GM12878 (cell line): ENCODE measurements at regions of chr1 and their contacts with region 1.

Region 1: DNA sequence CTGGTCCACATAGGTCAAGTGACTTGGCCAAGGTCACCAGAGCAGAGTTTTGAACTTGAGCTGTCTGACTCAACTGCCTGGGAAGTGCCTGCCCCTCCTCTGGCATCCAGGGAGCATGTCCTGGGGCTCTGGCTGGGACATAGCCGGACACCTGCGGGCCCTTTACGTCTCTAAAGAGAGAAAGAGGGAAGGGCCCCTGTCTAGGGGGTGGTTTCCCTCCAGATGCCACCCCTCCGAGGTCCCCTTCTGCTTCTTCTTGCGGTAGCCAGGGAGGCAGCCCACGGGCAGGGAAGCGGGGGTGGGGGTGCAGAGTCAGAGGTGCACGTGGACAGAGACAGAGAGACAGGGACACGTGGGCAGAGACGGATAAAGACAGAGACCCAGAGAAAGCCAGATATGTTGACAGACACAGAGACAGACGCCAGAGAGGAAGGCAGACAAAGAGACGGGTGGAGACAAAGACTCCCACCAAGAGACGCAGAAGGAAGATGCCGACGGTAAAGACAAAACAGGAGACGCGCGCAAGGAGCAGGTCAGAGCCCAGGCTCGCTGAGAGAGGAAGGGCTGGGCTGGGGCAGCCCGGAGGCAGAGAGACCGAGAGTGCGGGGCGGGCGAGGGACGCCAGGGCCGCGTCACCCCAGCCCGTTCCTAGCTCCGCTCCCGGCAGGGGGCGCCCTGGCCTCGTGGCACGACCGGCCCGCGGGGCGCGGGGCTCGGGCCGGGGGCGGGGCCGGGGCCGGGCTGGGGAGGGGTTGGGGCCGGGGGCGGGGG is 458 bp upstream of the ALPL start:
- DNase-seq: no peak
- ATAC-seq: peak; percentile 96
- H3K4me3 ChIP-seq: no peak overlapping the region
- H3K27ac ChIP-seq: no peak overlapping the region
- H3K4me1 ChIP-seq: peaks cover 3% of the 10 kb centered on the region
- H3K27me3 ChIP-seq: peaks cover 2 to 16% of the 10 kb centered on the region in 2 experiments
- CTCF ChIP-seq: peak; percentile 36 to 67 (median 65); a peak in 5 of 6 replicates
- EP300 ChIP-seq: no peak
- POLR2A ChIP-seq: no peak
- RAD21 ChIP-seq: peak; percentile 61

Region 2: GRCh38 chr1:21468599-21468998 is 40.2 kb before region 1 on chr1:
- CTCF ChIA-PET with region 1: no interaction called
- POLR2A ChIA-PET with region 1: no interaction called
- RAD21 ChIA-PET with region 1: no interaction called
- SMC1A ChIA-PET with region 1: no interaction called
- in situ Hi-C with region 1: no loop called
- intact Hi-C with region 1: no loop called
- DNase-seq: no peak
- ATAC-seq: no peak
- H3K4me3 ChIP-seq: no peak overlapping the region
- H3K27ac ChIP-seq: no peak overlapping the region
- H3K4me1 ChIP-seq: no peaks in the 10 kb centered on the region
- H3K27me3 ChIP-seq: no peaks in the 10 kb centered on the region
- CTCF ChIP-seq: peak in 2 of 3 experiments; percentile 35 to 36; a peak in 4 of 6 replicates
- EP300 ChIP-seq: no peak
- POLR2A ChIP-seq: no peak
- RAD21 ChIP-seq: peak; percentile 35

Region 3: DNA sequence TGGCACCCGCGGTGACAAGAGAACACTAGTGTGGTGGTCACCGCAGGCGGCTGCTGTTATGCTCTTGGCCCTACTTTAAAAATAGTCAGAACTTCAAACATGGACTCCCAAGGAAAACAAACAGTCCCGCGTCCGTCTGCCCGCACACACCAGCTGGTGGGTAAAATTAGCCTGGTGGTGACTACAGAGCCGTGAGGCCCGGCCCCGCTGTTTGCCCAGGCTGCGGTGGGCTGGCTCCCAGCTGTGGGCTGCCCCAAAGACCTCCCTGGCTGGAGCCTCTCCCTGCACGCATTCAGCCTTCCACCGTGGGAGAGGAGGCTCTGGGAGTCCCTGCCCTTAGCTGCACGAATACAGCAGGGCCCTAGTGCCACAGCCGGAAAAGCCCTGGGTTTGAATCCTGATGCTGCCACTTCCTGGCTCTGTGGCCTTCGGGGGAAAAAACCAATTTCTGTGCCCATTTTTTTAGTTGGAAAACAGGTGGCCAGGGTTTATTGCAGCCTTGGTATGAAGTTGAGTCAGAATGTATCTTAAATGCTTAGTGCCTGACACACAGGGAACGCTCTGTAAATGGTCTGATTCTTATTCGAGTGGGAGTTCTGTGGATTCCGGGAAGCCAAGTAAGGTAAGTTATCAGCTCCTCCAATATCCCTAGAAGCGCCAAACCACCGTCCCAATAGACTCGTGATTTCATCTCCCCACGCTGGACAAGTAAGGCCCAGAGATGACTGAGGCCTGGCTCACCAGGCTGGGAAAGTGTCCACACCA is 58.7 kb after region 1 on chr1:
- CTCF ChIA-PET with region 1: no interaction called
- POLR2A ChIA-PET with region 1: no interaction called
- RAD21 ChIA-PET with region 1: no interaction called
- SMC1A ChIA-PET with region 1: no interaction called
- in situ Hi-C with region 1: no loop called
- intact Hi-C with region 1: no loop called
- DNase-seq: no peak
- ATAC-seq: no peak
- H3K4me3 ChIP-seq: no peak overlapping the region
- H3K27ac ChIP-seq: no peak overlapping the region
- H3K4me1 ChIP-seq: no peaks in the 10 kb centered on the region
- H3K27me3 ChIP-seq: no peaks in the 10 kb centered on the region; a peak in 1 of 4 replicates
- CTCF ChIP-seq: no peak
- EP300 ChIP-seq: no peak
- POLR2A ChIP-seq: no peak
- RAD21 ChIP-seq: no peak

Region 4: DNA sequence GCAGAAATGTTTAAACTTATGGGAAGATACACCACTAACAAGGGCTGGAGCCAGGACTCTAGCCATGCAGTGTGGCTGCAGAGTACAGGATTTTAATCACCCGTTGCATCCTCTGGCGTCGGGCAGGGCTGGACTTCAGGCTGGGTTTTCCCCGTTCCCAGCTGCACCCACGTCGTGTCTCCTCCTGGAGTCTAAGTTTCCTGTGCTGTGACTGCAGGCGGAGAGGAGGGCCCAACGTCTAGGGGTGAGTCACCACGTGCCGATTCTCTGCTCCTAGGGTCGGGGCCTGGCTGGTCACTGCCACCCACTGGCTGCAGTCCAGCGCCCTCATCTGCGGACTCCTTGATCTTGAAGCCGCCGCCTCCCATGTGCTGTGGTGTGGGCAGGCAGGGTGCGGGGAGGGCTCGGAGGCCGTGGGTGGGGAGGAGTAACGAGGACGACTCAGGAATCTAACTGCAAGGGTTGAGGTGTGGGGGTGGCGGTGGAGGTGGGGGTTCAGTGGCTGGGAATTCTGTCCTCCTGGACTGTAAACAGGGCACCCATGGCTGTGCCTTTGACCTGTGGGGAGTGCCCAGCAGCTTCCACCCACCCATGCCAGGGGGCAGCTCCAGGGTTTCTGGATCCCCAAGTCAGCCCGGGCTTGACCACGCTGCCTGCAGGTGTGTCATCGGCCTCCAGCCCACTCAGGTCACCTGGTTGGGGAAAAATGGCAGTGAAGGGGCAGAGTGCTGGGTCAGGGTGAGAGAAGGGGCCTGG is 78.3 kb after region 1 on chr1:
- CTCF ChIA-PET with region 1: no interaction called
- POLR2A ChIA-PET with region 1: no interaction called
- RAD21 ChIA-PET with region 1: no interaction called
- SMC1A ChIA-PET with region 1: interaction called, 3 read pairs
- in situ Hi-C with region 1: no loop called
- intact Hi-C with region 1: loop called (anchors 5 kb)
- DNase-seq: no peak
- ATAC-seq: no peak
- H3K4me3 ChIP-seq: no peak overlapping the region
- H3K27ac ChIP-seq: no peak overlapping the region
- H3K4me1 ChIP-seq: no peaks in the 10 kb centered on the region
- H3K27me3 ChIP-seq: peaks cover 0 to 3% of the 10 kb centered on the region in 2 experiments; a peak in 1 of 4 replicates
- CTCF ChIP-seq: no peak
- EP300 ChIP-seq: no peak
- POLR2A ChIP-seq: no peak
- RAD21 ChIP-seq: no peak

Region 5: DNA sequence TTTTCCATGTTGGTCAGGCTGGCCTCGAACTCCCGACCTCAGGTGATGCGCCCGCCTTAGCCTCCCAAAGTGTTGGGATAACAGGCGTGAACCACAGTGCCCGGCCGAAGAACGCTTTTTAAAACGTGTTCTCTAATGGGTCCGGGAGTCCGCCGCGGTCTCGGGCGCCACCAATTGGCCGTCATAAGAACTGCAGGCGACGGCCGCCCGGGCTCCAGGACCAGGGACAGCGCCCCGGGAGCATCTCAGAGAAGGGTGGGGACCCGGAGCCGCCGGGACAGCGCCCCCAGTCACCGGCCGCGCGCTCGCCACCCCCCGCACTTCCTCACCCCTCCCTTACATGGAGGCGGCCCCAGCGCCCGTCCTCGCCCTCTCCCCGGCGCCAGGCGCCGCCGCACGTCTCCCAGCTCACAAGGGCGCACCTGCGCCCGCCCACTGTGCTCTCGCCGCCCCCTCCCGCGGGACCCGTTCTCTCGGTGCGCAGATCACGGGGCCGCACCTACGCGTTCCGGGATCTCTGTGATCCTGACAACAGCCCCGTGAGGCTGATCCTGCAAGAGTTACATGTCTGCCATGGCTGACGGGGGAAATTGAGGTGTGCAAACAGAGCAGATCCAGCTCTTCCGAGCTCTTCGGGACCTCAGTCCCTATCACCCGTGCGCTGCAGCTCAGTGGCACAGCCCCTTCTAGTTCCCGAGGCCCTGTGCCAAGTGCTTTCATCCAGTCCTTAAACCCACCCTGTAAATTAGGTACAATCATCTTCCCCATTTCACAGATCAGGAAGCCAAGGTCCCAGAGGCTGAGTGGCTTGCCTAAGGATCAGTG is 150.5 kb after region 1 on chr1:
- CTCF ChIA-PET with region 1: interaction called, 7 read pairs
- POLR2A ChIA-PET with region 1: no interaction called
- RAD21 ChIA-PET with region 1: interaction called, 3 read pairs
- SMC1A ChIA-PET with region 1: interaction called, 3 read pairs
- in situ Hi-C with region 1: no loop called
- intact Hi-C with region 1: loop called (anchors 10 kb)
- DNase-seq: no peak
- ATAC-seq: peak; percentile 92
- H3K4me3 ChIP-seq: no peak overlapping the region
- H3K27ac ChIP-seq: no peak overlapping the region
- H3K4me1 ChIP-seq: no peaks in the 10 kb centered on the region
- H3K27me3 ChIP-seq: peaks cover 0 to 2% of the 10 kb centered on the region in 2 experiments; a peak in 1 of 4 replicates
- CTCF ChIP-seq: peak; percentile 75 to 96 (median 87)
- EP300 ChIP-seq: no peak; a peak in 1 of 4 replicates
- POLR2A ChIP-seq: no peak
- RAD21 ChIP-seq: peak; percentile 79

Region 6: DNA sequence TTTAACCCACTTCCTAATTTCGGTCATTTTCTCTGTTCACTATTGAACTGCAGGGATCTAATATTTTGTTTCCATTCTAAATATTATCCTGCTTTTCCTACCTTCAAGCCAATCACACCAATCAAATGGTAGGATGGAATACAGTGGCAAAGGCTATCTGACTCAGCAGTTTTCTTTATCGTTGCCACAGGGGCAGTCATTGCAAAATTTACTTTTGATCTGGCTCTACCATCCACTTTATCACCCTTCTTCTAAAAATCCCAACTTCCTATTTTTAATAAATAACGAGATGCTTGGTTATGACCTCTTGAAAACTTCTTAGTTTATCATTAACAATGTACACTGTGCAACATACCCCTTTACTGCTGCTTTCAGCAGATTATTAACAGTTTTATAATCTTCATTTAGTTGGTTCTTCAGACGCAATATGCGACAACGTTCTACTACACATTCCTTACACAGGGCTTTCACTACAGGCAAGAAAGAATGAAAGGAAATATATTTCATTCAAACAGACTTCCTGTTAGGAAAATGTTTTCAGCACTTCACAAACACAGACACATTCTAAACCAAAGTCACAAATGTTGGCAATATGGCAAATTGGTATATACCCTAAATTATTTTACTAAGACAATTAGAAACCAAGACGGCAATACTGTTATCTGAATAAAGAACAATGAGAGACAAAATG is 212.7 kb after region 1 on chr1:
- CTCF ChIA-PET with region 1: no interaction called
- POLR2A ChIA-PET with region 1: no interaction called
- RAD21 ChIA-PET with region 1: no interaction called
- SMC1A ChIA-PET with region 1: no interaction called
- in situ Hi-C with region 1: no loop called
- intact Hi-C with region 1: no loop called
- DNase-seq: no peak
- ATAC-seq: no peak
- H3K4me3 ChIP-seq: no peak overlapping the region
- H3K27ac ChIP-seq: no peak overlapping the region
- H3K4me1 ChIP-seq: no peaks in the 10 kb centered on the region
- H3K27me3 ChIP-seq: no peaks in the 10 kb centered on the region
- CTCF ChIP-seq: no peak
- EP300 ChIP-seq: no peak
- POLR2A ChIP-seq: no peak
- RAD21 ChIP-seq: no peak

Region 7: GRCh38 chr1:21779613-21780521 is 271.1 kb after region 1 on chr1:
- CTCF ChIA-PET with region 1: no interaction called
- POLR2A ChIA-PET with region 1: no interaction called
- RAD21 ChIA-PET with region 1: no interaction called
- SMC1A ChIA-PET with region 1: no interaction called
- in situ Hi-C with region 1: no loop called
- intact Hi-C with region 1: no loop called
- DNase-seq: peak; percentile 98
- ATAC-seq: peak; percentile 49
- H3K4me3 ChIP-seq: peak overlapping the region; percentile 73
- H3K27ac ChIP-seq: peak overlapping the region; percentile 100
- H3K4me1 ChIP-seq: peaks cover 12% of the 10 kb centered on the region
- H3K27me3 ChIP-seq: no peaks in the 10 kb centered on the region
- CTCF ChIP-seq: no peak
- EP300 ChIP-seq: peak; percentile 93 to 94
- POLR2A ChIP-seq: peak; percentile 55; the same call in 1 of the 2 replicates
- RAD21 ChIP-seq: no peak